Activated CD4-positive, alpha-beta memory T cell treated with anti-CD3 and anti-CD28 coated beads for 36 hours (primary cell): ENCODE measurements at regions of chr18 and their contacts with region 1.

Region 1: GRCh38 chr18:7878265-7879211 is 311.4 kb downstream of the PTPRM start:
- DNase-seq: no peak
- H3K4me3 Mint-ChIP-seq: no peak overlapping the region
- H3K27ac Mint-ChIP-seq: no peak overlapping the region
- H3K4me1 Mint-ChIP-seq: no peaks in the 10 kb centered on the region
- H3K27me3 Mint-ChIP-seq: no peaks in the 10 kb centered on the region

Region 2: GRCh38 chr18:7535386-7535785 is 343.2 kb before region 1 on chr18:
- CTCF ChIA-PET with region 1: no interaction called
- POLR2A ChIA-PET with region 1: no interaction called
- intact Hi-C with region 1: no loop called
- DNase-seq: no peak
- H3K4me3 Mint-ChIP-seq: no peak overlapping the region
- H3K27ac Mint-ChIP-seq: no peak overlapping the region
- H3K4me1 Mint-ChIP-seq: no peaks in the 10 kb centered on the region
- H3K27me3 Mint-ChIP-seq: no peaks in the 10 kb centered on the region

Region 3: GRCh38 chr18:7760967-7761948 is 117.3 kb before region 1 on chr18:
- CTCF ChIA-PET with region 1: no interaction called
- POLR2A ChIA-PET with region 1: no interaction called
- intact Hi-C with region 1: no loop called
- DNase-seq: no peak
- H3K4me3 Mint-ChIP-seq: no peak overlapping the region
- H3K27ac Mint-ChIP-seq: no peak overlapping the region
- H3K4me1 Mint-ChIP-seq: no peaks in the 10 kb centered on the region
- H3K27me3 Mint-ChIP-seq: no peaks in the 10 kb centered on the region

Region 4: DNA sequence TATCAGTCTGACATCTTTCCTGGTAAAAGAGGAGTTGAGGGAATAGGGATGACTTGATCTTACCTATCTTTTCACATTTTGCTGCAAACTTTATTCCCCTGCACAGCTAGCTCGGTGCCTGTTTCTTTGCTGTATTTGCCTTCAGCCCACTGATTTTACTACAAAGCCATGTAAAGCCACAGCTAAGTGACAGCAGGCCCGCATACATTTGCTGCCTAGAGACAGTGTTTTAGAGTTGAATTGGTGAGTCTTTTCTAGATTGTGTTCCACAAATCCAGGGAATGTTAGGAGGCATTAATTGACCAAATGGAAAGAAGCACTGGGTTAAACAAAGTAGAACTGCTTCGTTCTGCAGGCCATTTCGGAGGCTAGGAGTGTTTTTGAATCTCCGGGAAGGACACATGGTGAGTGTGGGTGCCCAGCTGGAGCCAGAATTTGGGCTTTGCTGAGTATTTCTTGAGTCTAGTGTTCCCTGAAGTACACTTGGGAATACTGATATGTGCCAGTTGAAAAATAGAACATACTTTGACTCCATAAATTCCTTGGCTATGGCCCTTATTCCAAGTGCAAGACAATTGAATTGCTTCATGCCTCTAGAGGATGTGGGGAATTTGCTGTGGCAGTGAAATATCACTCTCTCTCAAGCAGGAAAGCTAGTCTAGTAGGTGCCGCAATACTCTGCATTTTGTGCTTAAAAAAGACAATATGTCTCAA is 18.4 kb after region 1 on chr18:
- CTCF ChIA-PET with region 1: no interaction called
- POLR2A ChIA-PET with region 1: no interaction called
- intact Hi-C with region 1: no loop called
- DNase-seq: no peak
- H3K4me3 Mint-ChIP-seq: no peak overlapping the region
- H3K27ac Mint-ChIP-seq: no peak overlapping the region
- H3K4me1 Mint-ChIP-seq: no peaks in the 10 kb centered on the region
- H3K27me3 Mint-ChIP-seq: no peaks in the 10 kb centered on the region

Region 5: DNA sequence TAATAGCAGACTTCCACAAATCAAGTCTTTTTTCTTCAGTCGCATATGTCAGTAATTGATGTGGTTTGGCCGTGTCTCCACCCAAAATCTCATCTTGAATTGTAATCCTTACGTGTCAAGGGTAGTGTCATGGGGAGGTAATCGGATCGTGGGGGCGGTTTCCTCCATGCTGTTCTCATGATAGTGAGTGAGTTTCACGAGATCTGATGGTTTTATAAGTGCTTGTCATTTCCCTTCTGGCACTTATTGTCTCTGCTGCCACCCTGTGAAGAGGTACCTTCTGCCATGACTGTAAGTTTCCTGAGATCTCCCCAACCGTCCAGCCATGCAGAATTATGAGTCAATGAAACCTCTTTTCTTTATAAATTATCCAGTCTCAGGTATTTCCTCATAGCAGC is 167.3 kb after region 1 on chr18:
- CTCF ChIA-PET with region 1: no interaction called
- POLR2A ChIA-PET with region 1: no interaction called
- intact Hi-C with region 1: loop called (anchors 5 kb)
- DNase-seq: peak; percentile 70
- H3K4me3 Mint-ChIP-seq: no peak overlapping the region
- H3K27ac Mint-ChIP-seq: no peak overlapping the region
- H3K4me1 Mint-ChIP-seq: peaks cover 18% of the 10 kb centered on the region
- H3K27me3 Mint-ChIP-seq: no peaks in the 10 kb centered on the region